ENCODE measurements at regions of chr6 and their contacts with region 1.

Region 1: GRCh38 chr6:25042036-25042521 is 106.3 kb upstream of the RIPOR2 start:
- DNase-seq: peak; percentile 80
- H3K4me3 Mint-ChIP-seq: peak overlapping the region; percentile 94
- H3K27ac Mint-ChIP-seq: peak overlapping the region; percentile 97
- H3K4me1 Mint-ChIP-seq: peaks cover 56% of the 10 kb centered on the region
- H3K27me3 Mint-ChIP-seq: no peaks in the 10 kb centered on the region

Region 2: DNA sequence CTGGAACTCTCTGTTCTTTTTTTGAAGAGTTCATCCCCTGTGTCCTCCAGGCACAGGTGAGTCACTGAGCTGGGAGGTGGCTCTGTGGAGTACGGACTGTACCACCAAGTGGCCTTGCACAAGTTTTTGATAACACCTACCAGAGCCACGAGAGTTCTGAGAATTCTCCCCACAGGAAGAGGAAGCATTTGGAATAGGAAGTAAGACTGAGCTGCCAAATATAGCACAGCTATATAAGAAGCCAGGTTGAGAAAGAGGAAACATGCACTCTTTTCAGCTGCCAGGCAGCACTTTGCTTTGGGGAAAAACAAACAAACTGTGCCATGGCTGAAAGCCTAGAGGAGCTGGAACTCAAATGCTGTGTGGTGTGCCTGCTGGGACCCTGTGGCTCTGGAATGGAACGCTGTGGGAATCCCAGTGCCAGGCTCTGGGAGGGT is 35.5 kb before region 1 on chr6:
- intact Hi-C with region 1: loop called (anchors 5 kb)
- DNase-seq: peak; percentile 88
- H3K4me3 Mint-ChIP-seq: peak overlapping the region; percentile 64
- H3K27ac Mint-ChIP-seq: peak overlapping the region; percentile 93
- H3K4me1 Mint-ChIP-seq: peaks cover 58% of the 10 kb centered on the region
- H3K27me3 Mint-ChIP-seq: no peaks in the 10 kb centered on the region

Region 3: GRCh38 chr6:25027221-25027916 is 14.7 kb before region 1 on chr6:
- intact Hi-C with region 1: loop called (anchors 1 kb)
- DNase-seq: peak; percentile 93
- H3K4me3 Mint-ChIP-seq: peak overlapping the region; percentile 83
- H3K27ac Mint-ChIP-seq: peak overlapping the region; percentile 90
- H3K4me1 Mint-ChIP-seq: peaks cover 39% of the 10 kb centered on the region
- H3K27me3 Mint-ChIP-seq: no peaks in the 10 kb centered on the region

Region 4: GRCh38 chr6:25056130-25056529 is 14.1 kb after region 1 on chr6:
- intact Hi-C with region 1: loop called (anchors 1 kb)
- DNase-seq: peak; percentile 94
- H3K4me3 Mint-ChIP-seq: peak overlapping the region; percentile 60
- H3K27ac Mint-ChIP-seq: peak overlapping the region; percentile 89
- H3K4me1 Mint-ChIP-seq: peaks cover 49% of the 10 kb centered on the region
- H3K27me3 Mint-ChIP-seq: no peaks in the 10 kb centered on the region

Measured in activated CD4-positive, alpha-beta T cell treated with anti-CD3 and anti-CD28 coated beads, Interleukin-2, amount 10 ng/mL, durations not matched to agents 24 days and 14 days (primary cell).